ENCODE measurements at regions of chr1 and their contacts with region 1.

Region 1: GRCh38 chr1:109984456-109985275 is at the start of gene AHCYL1:
- DNase-seq: peak; percentile 100
- ATAC-seq: peak; percentile 98
- H3K4me3 Mint-ChIP-seq: peak within 1 kb of the TSS; percentile 100
- H3K27ac Mint-ChIP-seq: peak within 1 kb of the TSS; percentile 97
- H3K4me1 Mint-ChIP-seq: peaks cover 38% of the 10 kb centered on the region
- H3K27me3 Mint-ChIP-seq: no peaks in the 10 kb centered on the region
- total RNA-seq, gene AHCYL1: 55.0 to 64.5 TPM

Region 2: GRCh38 chr1:109655601-109656519 is 328.8 kb before region 1 on chr1 and contains the start of gene GSTM4:
- CTCF ChIA-PET with region 1: interaction called, 42 read pairs
- POLR2A ChIA-PET with region 1: interaction called, 6 read pairs
- DNase-seq: peak; percentile 77
- ATAC-seq: peak; percentile 97
- H3K4me3 Mint-ChIP-seq: peak within 1 kb of the TSS; percentile 82
- H3K27ac Mint-ChIP-seq: peak within 1 kb of the TSS; percentile 87
- H3K4me1 Mint-ChIP-seq: peaks cover 17% of the 10 kb centered on the region
- H3K27me3 Mint-ChIP-seq: peaks cover 29% of the 10 kb centered on the region
- total RNA-seq, gene GSTM4: 17.0 to 18.5 TPM

Region 3: GRCh38 chr1:109796484-109797302 is 188.0 kb before region 1 on chr1:
- CTCF ChIA-PET with region 1: interaction called, 1,017 read pairs
- POLR2A ChIA-PET with region 1: interaction called, 3 read pairs
- DNase-seq: peak; percentile 51
- ATAC-seq: peak; percentile 59
- H3K4me3 Mint-ChIP-seq: peak overlapping the region; percentile 2
- H3K27ac Mint-ChIP-seq: peak overlapping the region; percentile 90
- H3K4me1 Mint-ChIP-seq: peaks cover 90% of the 10 kb centered on the region
- H3K27me3 Mint-ChIP-seq: no peaks in the 10 kb centered on the region

Region 4: DNA sequence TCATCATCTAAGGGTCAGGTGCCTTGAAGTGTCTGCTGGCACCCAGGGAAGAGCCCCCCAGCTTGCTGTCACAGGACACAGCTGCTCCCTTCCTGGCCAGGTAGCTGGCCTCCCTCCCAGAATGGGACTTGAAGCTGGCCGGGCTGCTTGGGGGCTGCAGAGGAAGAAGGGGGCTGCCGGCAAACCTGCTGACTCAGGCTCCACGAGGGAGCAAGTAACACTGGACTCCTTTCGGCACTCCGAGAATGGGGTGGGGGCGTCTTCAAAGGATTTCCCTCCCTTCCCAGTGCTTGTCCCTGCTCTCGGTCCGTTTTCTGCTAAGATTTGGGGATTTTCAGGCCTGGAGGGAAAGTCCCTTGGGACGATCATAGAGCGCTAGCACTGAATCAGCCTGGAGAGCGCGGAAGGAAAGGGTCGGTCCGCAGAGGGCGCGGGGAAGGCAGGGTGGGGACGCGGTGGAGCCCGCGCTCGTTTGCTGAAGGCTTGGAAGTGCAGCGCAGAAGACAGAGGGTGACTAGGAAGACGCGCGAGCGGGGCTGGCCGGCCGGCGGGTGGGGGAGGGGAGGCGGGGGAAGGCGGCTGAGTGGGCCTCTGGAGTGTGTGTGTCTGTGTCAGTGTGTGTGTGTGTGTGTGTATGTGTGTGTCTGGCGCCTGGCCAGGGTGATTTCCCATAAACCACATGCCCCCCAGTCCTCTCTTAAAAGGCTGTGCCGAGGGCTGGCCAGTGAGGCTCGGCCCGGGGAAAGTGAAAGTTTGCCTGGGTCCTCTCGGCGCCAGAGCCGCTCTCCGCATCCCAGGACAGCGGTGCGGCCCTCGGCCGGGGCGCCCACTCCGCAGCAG is 74.3 kb before region 1 on chr1 and contains the start of gene CSF1:
- CTCF ChIA-PET with region 1: interaction called, 21 read pairs
- POLR2A ChIA-PET with region 1: interaction called, 4 read pairs
- DNase-seq: peak; percentile 79
- ATAC-seq: peak; percentile 54
- H3K4me3 Mint-ChIP-seq: peak within 1 kb of the TSS; percentile 92
- H3K27ac Mint-ChIP-seq: peak within 1 kb of the TSS; percentile 95
- H3K4me1 Mint-ChIP-seq: peaks cover 83% of the 10 kb centered on the region
- H3K27me3 Mint-ChIP-seq: no peaks in the 10 kb centered on the region
- total RNA-seq, gene CSF1: 40.3 to 41.1 TPM

Region 5: GRCh38 chr1:109959974-109960744 is 24.5 kb before region 1 on chr1:
- CTCF ChIA-PET with region 1: interaction called, 14 read pairs
- POLR2A ChIA-PET with region 1: no interaction called
- DNase-seq: no peak
- ATAC-seq: no peak
- H3K4me3 Mint-ChIP-seq: no peak overlapping the region
- H3K27ac Mint-ChIP-seq: no peak overlapping the region
- H3K4me1 Mint-ChIP-seq: no peaks in the 10 kb centered on the region
- H3K27me3 Mint-ChIP-seq: peaks cover 32% of the 10 kb centered on the region

Region 6: DNA sequence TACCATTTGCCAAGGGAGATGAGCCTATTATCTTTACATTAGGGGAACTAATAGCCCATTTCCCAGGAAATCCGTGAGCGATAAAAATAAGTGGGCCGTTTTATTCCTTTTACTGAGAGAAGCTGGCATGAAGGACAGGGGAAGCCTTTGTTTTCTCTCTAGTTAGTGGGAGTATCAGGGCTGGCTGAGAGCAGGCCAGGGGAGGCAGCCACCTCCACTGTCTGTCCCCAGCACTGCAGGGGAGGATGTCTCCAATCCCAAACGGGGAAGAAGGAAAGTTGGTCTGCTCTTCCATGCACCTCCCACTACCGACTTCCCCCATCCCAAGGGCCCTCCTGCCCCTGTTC is 130.1 kb after region 1 on chr1:
- CTCF ChIA-PET with region 1: no interaction called
- POLR2A ChIA-PET with region 1: no interaction called
- DNase-seq: no peak
- ATAC-seq: no peak
- H3K4me3 Mint-ChIP-seq: no peak overlapping the region
- H3K27ac Mint-ChIP-seq: no peak overlapping the region
- H3K4me1 Mint-ChIP-seq: no peaks in the 10 kb centered on the region
- H3K27me3 Mint-ChIP-seq: peaks cover 5% of the 10 kb centered on the region

Region 7: GRCh38 chr1:110460253-110461220 is 475.9 kb after region 1 on chr1:
- CTCF ChIA-PET with region 1: no interaction called
- POLR2A ChIA-PET with region 1: no interaction called
- DNase-seq: peak; percentile 88
- ATAC-seq: peak; percentile 88
- H3K4me3 Mint-ChIP-seq: no peak overlapping the region
- H3K27ac Mint-ChIP-seq: no peak overlapping the region
- H3K4me1 Mint-ChIP-seq: no peaks in the 10 kb centered on the region
- H3K27me3 Mint-ChIP-seq: no peaks in the 10 kb centered on the region

Measured in activated CD8-positive, alpha-beta T cell treated with anti-CD3 and anti-CD28 coated beads, Interleukin-2, amount 10 ng/mL, durations not matched to agents 7 days and 5 days (primary cell).